ENCODE measurements at regions of chr1 and their contacts with region 1.

Region 1: DNA sequence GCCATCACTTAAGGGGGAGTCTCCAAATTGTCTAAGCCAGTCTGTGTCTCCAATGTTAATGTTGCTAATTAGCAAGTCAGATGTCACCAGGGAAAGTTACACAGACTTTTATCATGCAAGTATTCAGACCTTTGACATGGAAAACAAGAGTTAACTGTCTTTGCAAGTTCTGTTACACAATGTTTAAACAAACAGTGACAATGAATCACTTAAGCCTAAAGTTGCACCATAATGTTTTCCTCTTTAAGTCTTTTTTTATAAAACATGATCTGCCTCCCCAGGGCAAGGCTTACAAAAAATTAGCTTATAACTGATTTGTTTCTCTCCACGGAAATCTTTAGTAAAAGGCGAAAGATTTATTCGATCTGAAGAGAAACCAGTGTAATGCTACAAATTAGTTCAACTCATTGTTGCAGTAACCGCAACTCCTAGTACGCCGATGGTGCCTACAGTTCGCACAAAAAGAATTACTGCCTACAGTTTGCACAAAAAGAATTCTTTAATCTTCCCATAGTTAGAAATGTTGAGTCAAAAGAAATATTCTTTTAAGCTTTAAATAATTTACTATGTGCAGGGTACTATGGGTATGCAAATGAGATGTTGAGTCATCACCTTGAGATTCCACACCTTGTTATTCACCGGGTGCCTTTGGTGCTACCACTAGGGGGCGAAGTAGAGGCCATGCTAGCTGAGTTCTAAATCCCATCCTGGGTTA is 45.3 kb downstream of the HHAT start:
- DNase-seq: peak; percentile 89 to 90
- H3K4me3 ChIP-seq: no peak overlapping the region; a peak in 1 of 8 replicates
- H3K27ac ChIP-seq: peak overlapping the region; percentile 97
- H3K4me1 ChIP-seq: peaks cover 7 to 24% (median 18%) of the 10 kb centered on the region in 4 experiments
- H3K27me3 ChIP-seq: peaks cover 0 to 5% (median 2%) of the 10 kb centered on the region in 4 experiments; a peak in 1 of 7 replicates
- CTCF ChIP-seq: peak; percentile 66 to 96 (median 80)
- EP300 ChIP-seq: peak in 1 of 2 experiments; percentile 87; a peak in 1 of 3 replicates
- POLR2A ChIP-seq: peak; percentile 97 to 100
- RAD21 ChIP-seq: peak; percentile 59 to 68; a peak in 3 of 4 replicates

Region 2: DNA sequence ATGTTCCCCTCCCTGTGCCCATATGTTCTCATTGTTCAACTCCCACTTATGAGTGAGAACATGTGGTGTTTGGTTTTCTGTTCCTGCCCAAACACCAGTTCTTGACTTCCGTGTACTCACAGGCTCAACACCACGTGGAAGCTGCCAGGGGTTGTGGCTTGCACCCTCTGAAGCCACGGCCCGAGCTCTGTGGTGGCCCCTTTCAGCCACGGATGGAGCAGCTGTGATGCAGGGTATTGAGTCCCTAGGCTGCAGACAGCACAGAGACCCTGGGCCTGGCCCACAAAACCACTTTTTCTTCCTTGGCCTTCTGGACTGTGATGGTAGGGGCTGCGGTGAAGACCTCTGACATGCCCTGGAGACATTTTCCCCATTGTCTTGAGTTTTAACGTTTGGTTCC is 324.4 kb before region 1 on chr1:
- CTCF ChIA-PET with region 1: no interaction called
- POLR2A ChIA-PET with region 1: interaction called, 11 read pairs
- DNase-seq: no peak
- H3K4me3 ChIP-seq: no peak overlapping the region
- H3K27ac ChIP-seq: no peak overlapping the region
- H3K4me1 ChIP-seq: no peaks in the 10 kb centered on the region
- H3K27me3 ChIP-seq: no peaks in the 10 kb centered on the region
- CTCF ChIP-seq: no peak
- EP300 ChIP-seq: no peak
- POLR2A ChIP-seq: no peak
- RAD21 ChIP-seq: no peak

Region 3: DNA sequence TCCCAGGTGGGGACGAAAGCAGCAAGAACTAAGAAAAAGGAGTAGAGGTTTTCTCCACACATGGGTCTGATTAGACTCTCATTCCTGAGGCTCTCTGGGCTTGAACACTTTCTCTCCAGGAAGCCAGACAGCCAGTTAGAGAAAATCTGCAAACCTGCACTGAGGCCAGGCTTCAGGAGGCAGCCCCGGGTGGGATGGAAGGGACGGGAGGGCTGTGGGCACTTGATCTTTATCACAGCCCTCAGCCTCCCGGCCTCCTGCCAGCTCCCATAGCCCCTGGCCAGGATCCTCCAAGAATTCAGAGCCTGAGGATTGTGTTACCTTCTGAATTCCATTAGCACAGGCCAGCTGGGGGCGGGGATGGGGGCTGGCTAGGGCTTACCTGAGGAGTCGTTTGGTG is 101.4 kb before region 1 on chr1:
- CTCF ChIA-PET with region 1: interaction called, 3 read pairs
- POLR2A ChIA-PET with region 1: interaction called, 11 read pairs
- DNase-seq: peak in 1 of 2 experiments; percentile 61
- H3K4me3 ChIP-seq: no peak overlapping the region
- H3K27ac ChIP-seq: no peak overlapping the region
- H3K4me1 ChIP-seq: peaks cover 3 to 15% (median 10%) of the 10 kb centered on the region in 4 experiments; a peak in 6 of 7 replicates
- H3K27me3 ChIP-seq: no peaks in the 10 kb centered on the region
- CTCF ChIP-seq: no peak
- EP300 ChIP-seq: no peak
- POLR2A ChIP-seq: no peak
- RAD21 ChIP-seq: 0 out of 4 replicates have a peak, but pooled peaks of 1 of the 2 experiments have one; percentile 6

Region 4: DNA sequence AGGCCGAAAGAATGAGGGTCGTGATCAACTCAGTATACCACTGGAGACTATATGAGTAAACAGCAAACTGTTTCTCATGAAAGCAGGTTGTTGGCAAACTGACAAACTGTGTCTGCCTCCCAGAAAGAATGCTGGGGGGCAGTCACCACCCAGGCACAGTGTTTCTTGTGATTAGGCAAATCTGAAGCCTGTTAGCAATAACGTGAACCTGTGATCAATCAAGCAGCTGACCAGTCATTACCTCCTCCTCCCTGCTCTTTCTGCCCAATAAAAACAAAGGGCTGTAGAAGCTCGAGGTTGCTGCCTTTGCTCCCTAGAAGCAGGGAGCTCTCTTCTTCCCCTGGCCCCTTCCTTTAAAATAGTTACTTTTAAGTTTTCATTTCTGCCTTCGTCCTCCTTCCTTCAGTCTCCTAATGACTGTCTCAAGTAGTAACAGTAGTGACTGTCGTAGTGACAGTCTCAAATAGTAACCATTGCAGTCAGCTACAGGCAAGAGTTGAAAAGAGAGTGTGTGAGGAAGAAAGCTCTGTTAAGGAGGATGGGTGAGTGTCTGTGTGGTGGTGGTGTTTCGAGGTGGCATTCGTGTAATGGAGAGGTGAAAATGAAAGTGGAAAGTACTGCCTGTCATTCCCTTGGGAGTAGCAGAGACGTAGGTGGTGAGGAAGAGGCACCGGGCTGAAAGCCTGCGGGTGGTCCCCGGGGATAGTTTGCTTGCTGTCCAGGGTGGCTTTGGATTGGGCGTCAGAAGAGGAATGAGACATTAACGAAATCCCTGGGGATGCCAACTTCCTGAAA is 30.9 kb before region 1 on chr1:
- CTCF ChIA-PET with region 1: no interaction called
- POLR2A ChIA-PET with region 1: interaction called, 21 read pairs
- DNase-seq: no peak
- H3K4me3 ChIP-seq: no peak overlapping the region
- H3K27ac ChIP-seq: no peak overlapping the region
- H3K4me1 ChIP-seq: no peaks in the 10 kb centered on the region
- H3K27me3 ChIP-seq: no peaks in the 10 kb centered on the region
- CTCF ChIP-seq: no peak
- EP300 ChIP-seq: no peak
- POLR2A ChIP-seq: no peak
- RAD21 ChIP-seq: no peak

Region 5: GRCh38 chr1:210394281-210394821 is 20.3 kb after region 1 on chr1:
- CTCF ChIA-PET with region 1: interaction called, 179 read pairs
- POLR2A ChIA-PET with region 1: interaction called, 197 read pairs
- DNase-seq: no peak
- H3K4me3 ChIP-seq: no peak overlapping the region
- H3K27ac ChIP-seq: no peak overlapping the region
- H3K4me1 ChIP-seq: no peaks in the 10 kb centered on the region
- H3K27me3 ChIP-seq: no peaks in the 10 kb centered on the region
- CTCF ChIP-seq: no peak
- EP300 ChIP-seq: no peak
- POLR2A ChIP-seq: no peak
- RAD21 ChIP-seq: no peak

Region 6: GRCh38 chr1:210448297-210448892 is 74.4 kb after region 1 on chr1:
- CTCF ChIA-PET with region 1: interaction called, 3 read pairs
- POLR2A ChIA-PET with region 1: interaction called, 13 read pairs
- DNase-seq: no peak
- H3K4me3 ChIP-seq: no peak overlapping the region
- H3K27ac ChIP-seq: no peak overlapping the region
- H3K4me1 ChIP-seq: peaks cover 0 to 5% (median 0%) of the 10 kb centered on the region in 4 experiments; a peak in 1 of 7 replicates
- H3K27me3 ChIP-seq: no peaks in the 10 kb centered on the region; a peak in 1 of 7 replicates
- CTCF ChIP-seq: peak in 2 of 3 experiments; percentile 55 to 76; a peak in 2 of 4 replicates
- EP300 ChIP-seq: no peak
- POLR2A ChIP-seq: no peak
- RAD21 ChIP-seq: peak; percentile 89 to 90

Region 7: GRCh38 chr1:210641582-210641981 is 267.5 kb after region 1 on chr1:
- CTCF ChIA-PET with region 1: no interaction called
- POLR2A ChIA-PET with region 1: no interaction called
- DNase-seq: no peak
- H3K4me3 ChIP-seq: no peak overlapping the region
- H3K27ac ChIP-seq: no peak overlapping the region
- H3K4me1 ChIP-seq: no peaks in the 10 kb centered on the region
- H3K27me3 ChIP-seq: no peaks in the 10 kb centered on the region
- CTCF ChIP-seq: no peak
- EP300 ChIP-seq: no peak
- POLR2A ChIP-seq: no peak
- RAD21 ChIP-seq: no peak

Measured in H1 (cell line).